Left colon (tissue), 2 donors: ENCODE measurements at regions of chrX and their contacts with region 1.

Region 1: GRCh38 chrX:13487731-13488523 is 81.5 kb upstream of the EGFL6 start:
- DNase-seq: peak in 1 of 2 donors; percentile 49
- ATAC-seq: peak; percentile 61

Region 2: GRCh38 chrX:12974796-12975669 is 512.9 kb before region 1 on chrX and contains the start of gene TMSB4X:
- intact Hi-C with region 1: loop called in 1 of 2 experiments (anchors 10 kb)
- DNase-seq: peak; percentile 85 to 90
- ATAC-seq: peak; percentile 76
- total RNA-seq, gene TMSB4X: 4,840 to 5,007 TPM

Region 3: DNA sequence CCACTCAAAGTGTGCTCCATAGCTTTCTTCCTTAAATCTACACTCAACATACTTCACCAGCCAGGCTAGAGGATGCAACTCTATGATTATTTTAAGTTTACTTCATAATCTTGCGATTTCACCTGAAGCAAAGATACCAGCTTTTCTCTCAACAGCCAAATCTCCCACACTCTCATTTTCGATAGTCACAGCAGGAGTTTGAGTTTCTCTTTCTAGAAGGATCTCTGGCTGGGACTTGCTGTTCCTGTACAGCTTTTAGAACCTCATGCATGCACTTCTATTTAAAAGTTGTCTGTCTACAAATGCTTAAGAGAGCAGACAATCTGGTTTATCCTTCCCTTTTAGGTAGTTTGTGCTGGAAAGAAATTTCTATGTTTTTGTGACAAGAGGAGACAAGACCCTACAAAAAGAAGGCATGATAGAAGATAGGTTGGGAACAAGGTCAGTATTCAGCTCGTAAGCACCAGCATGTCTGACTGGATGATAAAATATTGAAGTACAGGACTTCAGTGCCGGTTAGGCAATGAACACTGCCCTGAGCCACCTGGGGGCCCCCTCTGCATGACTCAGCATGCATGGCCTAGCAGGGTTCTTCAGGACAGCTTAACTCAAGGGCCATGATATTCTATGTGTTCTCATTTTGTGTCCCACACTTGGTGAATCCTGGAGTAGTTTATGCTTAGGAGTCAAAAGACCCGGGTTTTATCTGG is 233.7 kb before region 1 on chrX:
- intact Hi-C with region 1: no loop called
- DNase-seq: peak; percentile 34 to 40
- ATAC-seq: peak; percentile 71